ENCODE measurements at regions of chr2 and their contacts with region 1.

Region 1: GRCh38 chr2:177263451-177264208 is 897 bp downstream of the NFE2L2 start:
- DNase-seq: peak; percentile 91 to 98 (median 96)
- ATAC-seq: peak; percentile 66
- H3K4me3 ChIP-seq: peak overlapping the region; percentile 72
- H3K4me3 Mint-ChIP-seq: peak overlapping the region; percentile 98
- H3K27ac ChIP-seq: peak overlapping the region; percentile 96 to 100
- H3K27ac Mint-ChIP-seq: peak overlapping the region; percentile 99
- H3K4me1 ChIP-seq: peaks cover 31% of the 10 kb centered on the region
- H3K4me1 Mint-ChIP-seq: peaks cover 65% of the 10 kb centered on the region
- H3K27me3 ChIP-seq: no peaks in the 10 kb centered on the region
- H3K27me3 Mint-ChIP-seq: no peaks in the 10 kb centered on the region
- CTCF ChIP-seq: peak; percentile 88

Region 2: GRCh38 chr2:176931588-176932563 is 331.8 kb before region 1 on chr2:
- CTCF ChIA-PET with region 1: no interaction called
- POLR2A ChIA-PET with region 1: no interaction called
- intact Hi-C with region 1: no loop called
- DNase-seq: peak in 3 of 14 experiments; percentile 51 to 78 (median 62)
- ATAC-seq: peak; percentile 37
- H3K4me3 ChIP-seq: no peak overlapping the region
- H3K4me3 Mint-ChIP-seq: peak overlapping the region; percentile 12
- H3K27ac ChIP-seq: peak overlapping the region in 1 of 2 donors; percentile 9
- H3K27ac Mint-ChIP-seq: no peak overlapping the region
- H3K4me1 ChIP-seq: peaks cover 5% of the 10 kb centered on the region
- H3K4me1 Mint-ChIP-seq: peaks cover 7% of the 10 kb centered on the region
- H3K27me3 ChIP-seq: no peaks in the 10 kb centered on the region
- H3K27me3 Mint-ChIP-seq: no peaks in the 10 kb centered on the region
- CTCF ChIP-seq: no peak

Region 3: DNA sequence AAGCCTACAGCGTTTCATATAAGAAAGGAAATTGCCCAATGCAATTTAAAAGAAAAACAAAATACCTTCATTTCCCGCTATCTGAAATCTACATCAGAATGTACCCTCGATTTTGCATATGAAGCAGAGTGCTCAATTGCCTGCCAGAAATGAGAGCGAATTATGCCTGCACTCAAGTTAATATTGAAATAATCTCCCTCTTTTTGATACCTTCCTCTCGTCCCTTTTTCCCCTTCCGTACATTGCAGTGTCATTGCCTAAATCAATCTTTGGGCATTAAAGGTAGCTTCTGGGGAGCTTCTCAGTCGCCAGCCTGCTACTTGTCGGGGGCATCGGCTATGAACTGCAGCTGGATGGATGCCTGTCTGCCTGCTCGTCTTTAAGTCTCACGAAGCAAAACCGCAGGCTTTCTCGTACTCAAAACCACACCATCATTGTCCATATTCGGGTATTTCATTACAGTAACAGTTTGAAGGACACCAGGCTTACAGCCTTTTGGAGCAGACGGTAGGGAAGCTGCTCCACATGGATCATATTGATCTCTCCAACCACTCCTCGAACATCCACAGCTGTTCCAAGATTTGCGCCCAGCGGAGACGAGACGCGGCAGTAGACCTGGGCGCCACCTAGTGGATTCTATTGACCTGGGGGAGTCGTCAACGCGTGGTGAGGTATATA is 115.0 kb before region 1 on chr2:
- CTCF ChIA-PET with region 1: interaction called, 10 read pairs
- POLR2A ChIA-PET with region 1: interaction called, 22 read pairs
- intact Hi-C with region 1: no loop called
- DNase-seq: peak; percentile 50 to 84 (median 62)
- ATAC-seq: peak; percentile 89
- H3K4me3 ChIP-seq: peak overlapping the region; percentile 56
- H3K4me3 Mint-ChIP-seq: peak overlapping the region; percentile 83
- H3K27ac ChIP-seq: no peak overlapping the region
- H3K27ac Mint-ChIP-seq: peak overlapping the region; percentile 8
- H3K4me1 ChIP-seq: peaks cover 8% of the 10 kb centered on the region
- H3K4me1 Mint-ChIP-seq: peaks cover 13% of the 10 kb centered on the region
- H3K27me3 ChIP-seq: peaks cover 4 to 25% of the 10 kb centered on the region in 2 experiments
- H3K27me3 Mint-ChIP-seq: peaks cover 49% of the 10 kb centered on the region
- CTCF ChIP-seq: peak; percentile 99

Region 4: GRCh38 chr2:177221534-177221933 is 42.1 kb before region 1 on chr2:
- CTCF ChIA-PET with region 1: interaction called, 12 read pairs
- POLR2A ChIA-PET with region 1: interaction called, 141 read pairs
- intact Hi-C with region 1: loop called (anchors 1 to 5 kb)
- DNase-seq: no peak
- ATAC-seq: no peak
- H3K4me3 ChIP-seq: no peak overlapping the region
- H3K4me3 Mint-ChIP-seq: no peak overlapping the region
- H3K27ac ChIP-seq: no peak overlapping the region
- H3K27ac Mint-ChIP-seq: peak overlapping the region; percentile 22
- H3K4me1 ChIP-seq: peaks cover 12% of the 10 kb centered on the region
- H3K4me1 Mint-ChIP-seq: peaks cover 65% of the 10 kb centered on the region
- H3K27me3 ChIP-seq: no peaks in the 10 kb centered on the region
- H3K27me3 Mint-ChIP-seq: no peaks in the 10 kb centered on the region
- CTCF ChIP-seq: no peak

Region 5: DNA sequence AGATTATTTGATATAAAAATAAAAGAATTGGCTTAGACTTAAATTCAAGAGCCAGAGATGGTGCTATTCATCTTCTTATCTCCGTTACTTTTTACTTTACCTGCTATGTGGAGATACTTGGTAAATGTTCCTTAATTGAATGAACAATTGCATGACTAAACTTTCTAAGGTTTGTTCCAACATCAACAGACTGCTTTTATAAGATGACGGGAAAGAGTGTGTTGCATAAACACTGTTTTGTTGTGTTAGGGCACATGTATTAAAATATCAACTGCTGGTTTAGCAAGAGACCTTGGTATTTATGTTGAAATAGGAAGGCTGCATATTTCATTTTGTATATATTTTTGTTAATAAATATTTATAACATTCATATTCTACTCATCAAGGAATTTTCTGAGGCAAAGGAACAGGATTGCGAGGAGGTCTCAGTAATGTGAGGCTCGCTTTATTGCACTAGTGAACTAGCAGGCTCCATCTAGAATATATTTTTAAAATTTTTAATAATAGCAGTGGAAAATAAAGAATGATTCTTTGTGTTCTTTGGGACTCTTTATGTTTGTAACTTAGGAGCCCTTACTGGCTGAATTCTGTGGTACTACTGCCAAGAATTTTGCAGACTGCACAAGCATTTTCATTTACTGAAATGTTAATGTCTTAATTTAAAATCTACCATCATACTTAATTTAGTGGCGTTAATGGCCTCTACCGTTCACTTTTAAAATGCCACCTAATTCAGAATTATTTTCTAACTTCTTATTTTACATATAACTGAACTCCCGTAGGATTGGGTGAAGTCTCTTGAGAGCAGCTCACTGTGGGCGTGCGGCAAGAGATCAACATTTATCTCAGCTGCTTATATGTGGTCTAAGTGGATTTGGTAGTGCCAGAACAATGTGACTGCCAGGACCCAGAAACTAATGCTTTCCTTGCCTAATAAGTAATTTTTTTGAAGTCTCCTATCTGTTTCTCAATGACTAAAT is 11.7 kb after region 1 on chr2:
- CTCF ChIA-PET with region 1: interaction called, 14 read pairs
- POLR2A ChIA-PET with region 1: interaction called, 59 read pairs
- intact Hi-C with region 1: no loop called
- DNase-seq: no peak
- ATAC-seq: no peak
- H3K4me3 ChIP-seq: no peak overlapping the region
- H3K4me3 Mint-ChIP-seq: no peak overlapping the region
- H3K27ac ChIP-seq: no peak overlapping the region
- H3K27ac Mint-ChIP-seq: no peak overlapping the region
- H3K4me1 ChIP-seq: no peaks in the 10 kb centered on the region
- H3K4me1 Mint-ChIP-seq: no peaks in the 10 kb centered on the region
- H3K27me3 ChIP-seq: no peaks in the 10 kb centered on the region
- H3K27me3 Mint-ChIP-seq: no peaks in the 10 kb centered on the region
- CTCF ChIP-seq: no peak

Region 6: DNA sequence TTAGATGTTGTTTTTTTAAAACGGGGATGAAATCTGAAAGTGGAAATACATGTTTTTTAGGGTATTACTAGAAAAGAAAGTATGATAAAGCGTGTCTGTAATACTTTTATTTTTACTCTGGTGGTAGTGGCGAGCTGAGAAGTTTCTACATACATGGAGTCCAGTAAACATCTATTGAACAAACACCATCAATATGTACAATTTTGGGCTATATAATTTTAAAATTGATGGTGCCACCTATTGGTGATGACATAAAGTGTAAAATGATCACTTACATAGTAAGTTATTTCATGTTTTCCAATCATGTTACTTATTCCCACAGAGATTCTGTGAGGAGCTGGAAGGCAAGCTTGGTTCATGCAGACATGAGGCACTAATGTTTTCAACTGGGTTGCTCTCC is 32.4 kb after region 1 on chr2:
- CTCF ChIA-PET with region 1: interaction called, 29 read pairs
- POLR2A ChIA-PET with region 1: interaction called, 154 read pairs
- intact Hi-C with region 1: loop called (anchors 1 to 2 kb)
- DNase-seq: peak in 3 of 14 experiments; percentile 50 to 67 (median 65)
- ATAC-seq: peak; percentile 60
- H3K4me3 ChIP-seq: no peak overlapping the region
- H3K4me3 Mint-ChIP-seq: no peak overlapping the region
- H3K27ac ChIP-seq: no peak overlapping the region
- H3K27ac Mint-ChIP-seq: no peak overlapping the region
- H3K4me1 ChIP-seq: peaks cover 1% of the 10 kb centered on the region
- H3K4me1 Mint-ChIP-seq: peaks cover 21% of the 10 kb centered on the region
- H3K27me3 ChIP-seq: no peaks in the 10 kb centered on the region
- H3K27me3 Mint-ChIP-seq: no peaks in the 10 kb centered on the region
- CTCF ChIP-seq: peak; percentile 77

Region 7: DNA sequence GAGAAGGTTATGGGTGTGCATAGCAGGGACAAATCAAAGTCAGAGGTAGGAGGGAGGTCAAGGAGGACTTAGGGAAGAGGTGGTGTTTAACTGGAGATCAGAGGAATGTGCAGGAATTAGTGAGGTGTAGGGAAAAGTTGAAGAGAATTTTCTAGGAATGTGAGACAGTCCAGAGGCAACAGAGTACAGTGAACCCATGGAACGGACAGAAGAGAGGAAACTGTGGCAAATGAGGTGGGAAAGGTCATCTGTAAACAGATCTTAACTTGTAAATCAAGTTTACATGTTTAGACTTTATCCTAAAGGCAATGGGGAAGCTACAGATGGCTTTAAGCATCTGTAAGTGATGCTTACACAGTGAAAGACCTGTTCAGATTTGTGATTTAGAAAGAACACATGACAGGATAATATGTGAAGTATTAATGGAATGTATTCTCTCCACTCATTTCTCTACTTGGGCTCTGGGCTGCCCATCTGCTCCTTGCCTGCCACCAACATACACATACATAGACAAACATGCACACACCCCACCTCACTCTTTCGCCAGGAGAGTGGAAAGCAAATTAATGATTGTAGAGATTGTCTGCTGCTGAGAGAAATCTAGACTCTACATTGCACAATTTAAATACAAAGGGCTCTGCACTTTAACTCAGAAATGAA is 61.8 kb after region 1 on chr2:
- CTCF ChIA-PET with region 1: no interaction called
- POLR2A ChIA-PET with region 1: interaction called, 66 read pairs
- intact Hi-C with region 1: no loop called
- DNase-seq: no peak
- ATAC-seq: no peak
- H3K4me3 ChIP-seq: no peak overlapping the region
- H3K4me3 Mint-ChIP-seq: no peak overlapping the region
- H3K27ac ChIP-seq: no peak overlapping the region
- H3K27ac Mint-ChIP-seq: no peak overlapping the region
- H3K4me1 ChIP-seq: peaks cover 14% of the 10 kb centered on the region
- H3K4me1 Mint-ChIP-seq: no peaks in the 10 kb centered on the region
- H3K27me3 ChIP-seq: no peaks in the 10 kb centered on the region
- H3K27me3 Mint-ChIP-seq: no peaks in the 10 kb centered on the region
- CTCF ChIP-seq: no peak

Region 8: DNA sequence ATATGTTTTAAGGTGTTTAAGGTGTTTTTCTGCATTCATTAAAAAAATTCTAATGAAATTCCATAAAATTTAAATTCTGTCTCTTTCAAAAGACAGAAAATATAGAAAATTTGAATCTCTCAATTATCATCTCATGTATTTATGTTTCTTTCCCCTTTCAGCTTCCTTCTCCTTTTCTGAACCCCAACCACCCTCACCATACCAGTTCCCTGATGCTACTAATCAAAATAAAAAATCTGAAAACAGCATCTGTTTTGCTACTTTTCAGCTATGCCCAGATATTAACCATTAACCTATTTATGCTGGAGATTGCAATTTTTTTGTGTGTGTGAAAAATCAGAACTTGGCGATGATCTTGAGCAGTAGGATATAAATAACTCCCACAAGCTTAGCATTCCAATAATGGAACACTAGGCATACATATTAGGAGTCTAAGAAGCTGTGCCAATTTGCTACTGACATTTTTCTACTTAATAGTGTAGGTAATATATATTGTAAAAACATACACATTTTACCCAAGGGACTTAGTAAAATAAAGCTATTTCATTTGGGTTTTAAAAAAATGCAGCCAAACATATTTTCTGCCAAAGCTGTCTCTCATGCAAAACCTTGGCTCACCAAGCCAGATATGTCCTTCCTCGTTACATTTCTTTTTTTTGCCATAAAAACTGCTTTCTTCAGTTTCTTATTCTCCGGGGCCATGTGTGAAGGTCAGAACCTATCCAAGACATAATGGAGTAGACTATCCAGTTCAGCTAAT is 96.4 kb after region 1 on chr2:
- CTCF ChIA-PET with region 1: no interaction called
- POLR2A ChIA-PET with region 1: no interaction called
- intact Hi-C with region 1: no loop called
- DNase-seq: no peak
- ATAC-seq: no peak
- H3K4me3 ChIP-seq: no peak overlapping the region
- H3K4me3 Mint-ChIP-seq: no peak overlapping the region
- H3K27ac ChIP-seq: no peak overlapping the region
- H3K27ac Mint-ChIP-seq: no peak overlapping the region
- H3K4me1 ChIP-seq: no peaks in the 10 kb centered on the region
- H3K4me1 Mint-ChIP-seq: no peaks in the 10 kb centered on the region
- H3K27me3 ChIP-seq: no peaks in the 10 kb centered on the region
- H3K27me3 Mint-ChIP-seq: no peaks in the 10 kb centered on the region
- CTCF ChIP-seq: no peak

Region 9: DNA sequence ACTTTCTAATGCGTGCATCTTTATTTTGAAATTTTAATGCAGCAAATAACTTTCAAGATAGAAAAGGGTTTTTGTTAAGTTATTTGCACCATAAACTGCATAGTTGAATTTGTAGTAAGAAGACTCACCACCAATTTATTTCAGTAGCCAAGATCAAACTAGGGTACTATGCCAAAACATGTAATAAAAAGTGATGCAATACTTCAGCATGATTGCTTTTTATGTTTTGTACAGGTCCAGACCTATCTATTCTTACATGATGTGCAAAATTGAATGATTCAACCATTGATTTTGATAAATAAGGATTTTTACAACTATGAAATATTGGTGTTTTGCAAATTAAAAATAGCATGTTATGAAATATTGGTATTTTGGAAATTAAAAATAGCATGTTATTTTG is 155.6 kb after region 1 on chr2:
- CTCF ChIA-PET with region 1: no interaction called
- POLR2A ChIA-PET with region 1: interaction called, 18 read pairs
- intact Hi-C with region 1: loop called in 1 of 2 experiments (anchors 5 kb)
- DNase-seq: no peak
- ATAC-seq: no peak
- H3K4me3 ChIP-seq: no peak overlapping the region
- H3K4me3 Mint-ChIP-seq: no peak overlapping the region
- H3K27ac ChIP-seq: no peak overlapping the region
- H3K27ac Mint-ChIP-seq: no peak overlapping the region
- H3K4me1 ChIP-seq: no peaks in the 10 kb centered on the region
- H3K4me1 Mint-ChIP-seq: peaks cover 29% of the 10 kb centered on the region
- H3K27me3 ChIP-seq: no peaks in the 10 kb centered on the region
- H3K27me3 Mint-ChIP-seq: no peaks in the 10 kb centered on the region
- CTCF ChIP-seq: no peak